CD4-positive, alpha-beta T cell (primary cell): ENCODE measurements at regions of chr6 and their contacts with region 1.

Region 1: GRCh38 chr6:137389150-137389704 is 105.0 kb downstream of the OLIG3 start:
- DNase-seq: peak; percentile 10 to 91 (median 62)
- ATAC-seq: peak; percentile 95
- H3K4me3 ChIP-seq: peak overlapping the region; percentile 28
- H3K4me3 Mint-ChIP-seq: peak overlapping the region; percentile 70
- H3K27ac ChIP-seq: peak overlapping the region; percentile 54 to 75
- H3K27ac Mint-ChIP-seq: peak overlapping the region; percentile 82
- H3K4me1 ChIP-seq: peaks cover 57% of the 10 kb centered on the region
- H3K4me1 Mint-ChIP-seq: peaks cover 63% of the 10 kb centered on the region
- H3K27me3 ChIP-seq: no peaks in the 10 kb centered on the region
- H3K27me3 Mint-ChIP-seq: no peaks in the 10 kb centered on the region
- CTCF ChIP-seq: no peak

Region 2: GRCh38 chr6:136666041-136666440 is 723.2 kb before region 1 on chr6:
- CTCF ChIA-PET with region 1: no interaction called
- POLR2A ChIA-PET with region 1: no interaction called
- intact Hi-C with region 1: no loop called
- DNase-seq: no peak
- ATAC-seq: no peak
- H3K4me3 ChIP-seq: no peak overlapping the region
- H3K4me3 Mint-ChIP-seq: no peak overlapping the region
- H3K27ac ChIP-seq: no peak overlapping the region
- H3K27ac Mint-ChIP-seq: no peak overlapping the region
- H3K4me1 ChIP-seq: no peaks in the 10 kb centered on the region
- H3K4me1 Mint-ChIP-seq: no peaks in the 10 kb centered on the region
- H3K27me3 ChIP-seq: no peaks in the 10 kb centered on the region
- H3K27me3 Mint-ChIP-seq: no peaks in the 10 kb centered on the region
- CTCF ChIP-seq: no peak

Region 3: DNA sequence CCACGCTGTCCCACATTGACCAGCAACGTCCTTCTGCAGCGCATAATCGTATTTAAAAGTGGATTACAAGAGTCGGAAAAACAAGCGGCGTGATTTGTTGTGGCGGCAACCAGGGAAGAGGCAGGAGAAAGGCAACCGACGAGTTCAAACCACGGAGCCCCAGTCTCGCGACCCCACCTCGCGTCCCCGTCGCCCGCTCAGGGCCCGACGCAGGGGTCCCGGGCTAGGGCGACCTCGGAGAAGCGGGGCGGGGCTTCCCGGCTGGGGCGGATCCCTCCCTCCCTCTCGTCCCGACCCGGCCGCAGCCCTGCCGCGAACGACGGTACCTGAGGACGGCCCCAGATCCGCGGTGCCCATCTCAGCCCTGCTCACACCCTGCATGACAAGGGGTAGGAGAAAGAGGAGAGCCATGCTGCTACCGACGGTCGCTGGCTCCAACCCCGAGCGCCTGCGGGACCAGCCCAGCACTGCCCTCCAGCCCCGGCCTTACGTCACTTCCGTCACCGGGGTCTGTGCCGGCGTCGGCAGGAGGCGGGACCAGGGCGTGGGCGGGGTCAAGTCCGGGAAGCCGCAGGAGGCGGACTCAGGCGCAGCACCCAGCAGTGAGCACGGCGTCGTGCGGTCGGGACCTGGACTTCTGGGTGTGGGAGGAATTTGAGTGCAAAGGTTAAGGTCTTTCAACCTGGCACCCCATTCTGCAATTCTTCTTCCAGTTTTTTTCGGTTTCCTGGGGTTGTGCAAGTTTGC is 170.1 kb before region 1 on chr6 and contains the start of gene IFNGR1:
- CTCF ChIA-PET with region 1: no interaction called
- POLR2A ChIA-PET with region 1: no interaction called
- intact Hi-C with region 1: no loop called
- DNase-seq: peak; percentile 90 to 99 (median 95)
- ATAC-seq: peak; percentile 82
- H3K4me3 ChIP-seq: peak within 1 kb of the TSS; percentile 65
- H3K4me3 Mint-ChIP-seq: peak within 1 kb of the TSS; percentile 95
- H3K27ac ChIP-seq: peak within 1 kb of the TSS; percentile 90 to 91
- H3K27ac Mint-ChIP-seq: peak within 1 kb of the TSS; percentile 93
- H3K4me1 ChIP-seq: peaks cover 45% of the 10 kb centered on the region
- H3K4me1 Mint-ChIP-seq: peaks cover 61% of the 10 kb centered on the region
- H3K27me3 ChIP-seq: no peaks in the 10 kb centered on the region
- H3K27me3 Mint-ChIP-seq: no peaks in the 10 kb centered on the region
- CTCF ChIP-seq: no peak
- total RNA-seq, gene IFNGR1: 81.7 to 84.3 TPM

Region 4: GRCh38 chr6:137351890-137352289 is 37.3 kb before region 1 on chr6:
- CTCF ChIA-PET with region 1: no interaction called
- POLR2A ChIA-PET with region 1: no interaction called
- intact Hi-C with region 1: loop called in 1 of 2 experiments (anchors 5 kb)
- DNase-seq: peak in 3 of 14 experiments; percentile 24 to 64 (median 60)
- ATAC-seq: no peak
- H3K4me3 ChIP-seq: no peak overlapping the region
- H3K4me3 Mint-ChIP-seq: no peak overlapping the region
- H3K27ac ChIP-seq: no peak overlapping the region
- H3K27ac Mint-ChIP-seq: no peak overlapping the region
- H3K4me1 ChIP-seq: peaks cover 13% of the 10 kb centered on the region
- H3K4me1 Mint-ChIP-seq: peaks cover 16% of the 10 kb centered on the region
- H3K27me3 ChIP-seq: no peaks in the 10 kb centered on the region
- H3K27me3 Mint-ChIP-seq: no peaks in the 10 kb centered on the region
- CTCF ChIP-seq: no peak

Region 5: GRCh38 chr6:139173172-139173571 is 1783.9 kb after region 1 on chr6:
- CTCF ChIA-PET with region 1: no interaction called
- POLR2A ChIA-PET with region 1: no interaction called
- intact Hi-C with region 1: no loop called
- DNase-seq: peak in 4 of 14 experiments; percentile 42 to 70 (median 54)
- ATAC-seq: peak; percentile 71
- H3K4me3 ChIP-seq: no peak overlapping the region
- H3K4me3 Mint-ChIP-seq: peak overlapping the region; percentile 40
- H3K27ac ChIP-seq: peak overlapping the region; percentile 31 to 49
- H3K27ac Mint-ChIP-seq: peak overlapping the region; percentile 48
- H3K4me1 ChIP-seq: peaks cover 69% of the 10 kb centered on the region
- H3K4me1 Mint-ChIP-seq: peaks cover 95% of the 10 kb centered on the region
- H3K27me3 ChIP-seq: no peaks in the 10 kb centered on the region
- H3K27me3 Mint-ChIP-seq: no peaks in the 10 kb centered on the region
- CTCF ChIP-seq: peak; percentile 39